ENCODE measurements at regions of chr15 and their contacts with region 1.

Region 1: DNA sequence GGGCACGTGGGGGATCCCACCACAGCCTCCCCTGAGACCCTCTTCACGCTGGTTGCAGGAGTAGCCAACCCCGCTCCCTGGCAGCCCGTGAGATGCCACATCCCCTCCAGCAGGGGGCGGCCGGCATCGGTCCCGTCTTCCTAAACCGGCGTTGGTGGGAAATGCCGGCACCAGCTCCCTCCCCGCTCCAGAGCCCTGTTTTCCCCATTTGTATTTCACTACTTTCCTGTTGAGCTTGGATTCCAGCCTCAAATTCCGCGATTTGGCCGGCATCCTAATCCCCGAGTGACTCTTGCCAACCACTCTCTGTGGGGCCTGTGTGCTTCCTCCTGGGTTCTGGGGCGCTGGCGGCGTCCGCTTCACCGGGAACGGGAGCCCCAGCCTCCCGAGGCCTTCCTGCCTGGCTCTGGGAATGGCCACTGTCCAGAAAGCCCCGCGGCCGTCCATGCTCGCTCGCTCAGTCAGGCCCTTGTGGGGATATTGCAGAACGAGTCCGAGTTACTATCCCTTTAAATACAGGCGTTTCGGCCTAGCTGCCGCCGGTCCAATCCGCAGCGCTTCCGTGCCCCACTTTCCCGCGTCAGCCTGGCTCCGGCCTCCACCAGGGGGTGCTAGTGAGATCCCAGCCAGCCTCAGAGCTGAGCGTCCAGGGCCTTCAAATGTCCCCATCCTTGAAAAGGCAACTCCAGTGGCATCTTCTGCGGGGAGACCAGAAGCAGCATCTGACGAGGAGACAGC is 8.1 kb upstream of the ADAMTS17 start:
- DNase-seq: peak; percentile 87 to 95 (median 92)
- H3K4me3 ChIP-seq: peak overlapping the region; percentile 53 to 94 (median 79)
- H3K27ac ChIP-seq: peak overlapping the region; percentile 37 to 96 (median 91)
- H3K27me3 ChIP-seq: peaks cover 0 to 12% (median 0%) of the 10 kb centered on the region in 45 donors
- CTCF ChIP-seq: peak; percentile 51 to 93 (median 78)

Region 2: DNA sequence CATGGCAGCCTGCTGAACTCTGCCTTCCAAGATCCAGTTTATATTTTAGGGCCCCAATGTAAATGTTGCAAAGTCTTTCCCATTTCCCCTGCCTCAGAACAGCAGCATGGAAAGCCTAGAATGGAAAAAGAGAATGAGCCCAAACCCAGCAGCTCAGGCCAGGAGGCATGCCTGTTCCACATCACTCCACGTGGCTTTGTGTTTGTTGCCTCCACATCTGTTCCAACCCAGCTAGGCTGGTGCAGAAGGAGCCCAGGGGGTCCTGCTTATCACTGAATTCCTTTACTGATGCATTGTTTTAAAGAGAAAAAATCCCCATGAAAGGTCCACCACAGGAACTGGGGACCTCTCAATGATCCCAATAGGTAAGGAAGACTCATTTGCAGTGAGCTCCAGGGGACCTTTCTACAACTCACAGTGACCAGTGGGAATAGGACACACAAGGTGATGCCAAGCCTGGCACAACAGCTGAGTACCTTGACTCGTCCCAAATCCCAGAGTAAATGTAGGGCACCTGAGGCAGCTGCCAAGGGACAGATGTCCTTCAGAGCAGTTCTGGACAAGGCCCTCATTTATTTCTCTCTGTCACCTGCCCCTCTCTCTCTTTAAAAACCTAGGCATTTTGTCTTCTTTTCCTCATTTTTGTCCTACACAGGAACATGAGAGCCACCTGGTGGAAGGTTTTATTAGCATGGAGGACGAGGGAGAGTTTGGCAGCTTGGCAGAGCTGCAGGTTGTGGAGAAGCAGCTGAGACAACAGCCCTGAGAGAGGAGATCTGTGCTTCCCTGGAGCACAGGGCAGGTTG is 33.6 kb after region 1 on chr15:
- intact Hi-C with region 1: loop called in 1 of 2 experiments (anchors 2 kb)
- DNase-seq: no peak
- H3K4me3 ChIP-seq: no peak overlapping the region
- H3K27ac ChIP-seq: no peak overlapping the region
- H3K27me3 ChIP-seq: peaks cover 0 to 5% (median 0%) of the 10 kb centered on the region in 45 donors
- CTCF ChIP-seq: peak in 52 of 56 donors; percentile 13 to 71 (median 44)

Region 3: DNA sequence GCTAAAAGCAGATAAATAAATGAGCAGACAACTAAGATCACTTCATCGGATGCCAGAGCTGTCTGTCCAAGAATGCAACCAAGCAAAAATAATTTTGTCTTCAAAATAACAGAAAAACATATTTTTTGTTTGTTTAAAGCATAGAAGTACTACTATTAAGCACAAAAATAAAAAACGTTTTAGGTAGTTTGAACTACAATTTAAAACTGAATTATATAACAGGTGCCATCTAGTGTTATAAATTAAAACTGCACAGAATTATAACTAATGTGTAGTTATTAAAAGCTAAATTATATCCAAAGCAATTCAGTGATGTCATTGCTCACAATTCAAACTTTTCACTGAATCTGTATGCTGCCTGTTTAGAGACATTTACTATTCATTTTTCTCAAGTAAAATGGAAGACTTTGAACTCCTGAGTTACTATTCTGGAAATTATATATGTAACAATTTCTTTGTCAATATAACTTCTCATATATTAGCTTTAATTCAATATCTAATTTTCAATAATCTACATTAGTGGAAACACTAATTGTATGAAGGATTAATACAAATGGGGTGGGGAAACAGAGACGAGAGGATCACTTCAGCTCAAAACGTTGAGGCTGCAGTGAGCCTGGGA is 222.6 kb after region 1 on chr15:
- intact Hi-C with region 1: loop called in 1 of 2 experiments (anchors 5 kb)
- DNase-seq: no peak
- H3K4me3 ChIP-seq: no peak overlapping the region
- H3K27ac ChIP-seq: peak overlapping the region in 1 of 59 donors; percentile 18
- H3K27me3 ChIP-seq: no peaks in the 10 kb centered on the region
- CTCF ChIP-seq: peak; percentile 40 to 78 (median 64)